Left lung (tissue), 14 donors: ENCODE measurements at regions of chr1 and their contacts with region 1.

Region 1: GRCh38 chr1:62175568-62176179 is 19.0 kb upstream of the L1TD1 start:
- DNase-seq: peak in 2 of 4 donors; percentile 47 to 69
- ATAC-seq: peak; percentile 83
- H3K4me3 ChIP-seq: no peak overlapping the region
- H3K27ac ChIP-seq: no peak overlapping the region
- H3K4me1 ChIP-seq: no peaks in the 10 kb centered on the region
- H3K27me3 ChIP-seq: no peaks in the 10 kb centered on the region
- CTCF ChIP-seq: peak; percentile 52 to 72

Region 2: GRCh38 chr1:62407405-62408009 is 231.8 kb after region 1 on chr1:
- intact Hi-C with region 1: loop called (anchors 2 to 10 kb)
- DNase-seq: peak in 2 of 4 donors; percentile 51 to 68
- ATAC-seq: peak; percentile 90
- H3K4me3 ChIP-seq: no peak overlapping the region
- H3K27ac ChIP-seq: no peak overlapping the region
- H3K4me1 ChIP-seq: no peaks in the 10 kb centered on the region
- H3K27me3 ChIP-seq: no peaks in the 10 kb centered on the region
- CTCF ChIP-seq: peak; percentile 73 to 74

Region 3: GRCh38 chr1:62746085-62746808 is 570.6 kb after region 1 on chr1:
- intact Hi-C with region 1: loop called in 1 of 2 experiments (anchors 10 kb)
- DNase-seq: peak in 2 of 4 donors; percentile 30 to 53
- ATAC-seq: peak; percentile 73
- H3K4me3 ChIP-seq: no peak overlapping the region
- H3K27ac ChIP-seq: no peak overlapping the region
- H3K4me1 ChIP-seq: no peaks in the 10 kb centered on the region
- H3K27me3 ChIP-seq: no peaks in the 10 kb centered on the region
- CTCF ChIP-seq: peak in 1 of 2 donors; percentile 39